ENCODE measurements at regions of chr10 and their contacts with region 1.

Region 1: DNA sequence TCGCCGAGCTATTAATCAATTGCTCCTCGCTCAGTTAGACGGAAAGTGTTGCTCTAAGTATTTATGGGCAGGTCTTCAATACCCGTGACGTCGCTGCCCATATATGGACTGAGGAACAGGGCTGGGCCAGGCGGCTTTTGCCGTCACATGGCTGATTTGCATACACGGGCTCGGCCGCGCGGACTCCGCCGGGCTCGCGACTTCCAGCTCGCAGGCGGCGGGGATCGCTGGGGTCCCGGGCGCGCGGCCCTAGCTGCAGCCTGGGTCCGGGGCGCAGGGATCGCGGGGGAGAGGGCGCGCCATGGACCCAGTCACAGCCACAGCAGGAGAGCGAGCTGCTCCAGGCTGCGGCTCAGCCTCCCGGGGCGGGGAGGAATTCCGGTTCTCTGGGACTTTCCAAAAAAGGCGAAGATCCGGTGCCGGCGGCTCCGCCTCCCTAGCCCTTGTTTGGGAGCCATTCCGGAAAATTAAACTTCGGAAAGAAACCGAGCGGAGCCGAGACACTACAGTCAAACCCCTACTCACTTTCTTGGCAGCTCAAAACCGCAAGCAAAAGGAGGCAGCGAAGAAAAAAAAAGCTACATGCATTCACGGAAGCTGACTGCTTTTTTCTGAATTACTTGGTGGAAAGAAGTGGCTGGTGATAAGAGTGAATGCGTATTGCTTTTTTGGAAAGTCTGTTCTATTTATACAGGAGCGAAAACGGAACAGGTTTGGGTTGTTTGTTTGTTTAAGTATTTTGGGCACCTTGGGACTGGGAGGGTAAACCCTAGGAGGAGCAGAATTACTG is at the start of gene EGR2:
- DNase-seq: peak; percentile 94
- H3K4me3 Mint-ChIP-seq: peak within 1 kb of the TSS; percentile 97
- H3K27ac Mint-ChIP-seq: peak within 1 kb of the TSS; percentile 100
- H3K4me1 Mint-ChIP-seq: peaks cover 45% of the 10 kb centered on the region
- H3K27me3 Mint-ChIP-seq: peaks cover 22% of the 10 kb centered on the region
- total RNA-seq, gene EGR2: 126 and 137 TPM in 2 replicates

Region 2: GRCh38 chr10:62437696-62438095 is 378.8 kb before region 1 on chr10:
- intact Hi-C with region 1: loop called (anchors 10 kb)
- DNase-seq: no peak
- H3K4me3 Mint-ChIP-seq: no peak overlapping the region
- H3K27ac Mint-ChIP-seq: no peak overlapping the region
- H3K4me1 Mint-ChIP-seq: peaks cover 12% of the 10 kb centered on the region
- H3K27me3 Mint-ChIP-seq: peaks cover 50% of the 10 kb centered on the region

Region 3: GRCh38 chr10:62610649-62611229 is 205.8 kb before region 1 on chr10:
- intact Hi-C with region 1: loop called (anchors 1 kb)
- DNase-seq: peak; percentile 58
- H3K4me3 Mint-ChIP-seq: no peak overlapping the region
- H3K27ac Mint-ChIP-seq: no peak overlapping the region
- H3K4me1 Mint-ChIP-seq: peaks cover 52% of the 10 kb centered on the region
- H3K27me3 Mint-ChIP-seq: peaks cover 5% of the 10 kb centered on the region

Region 4: DNA sequence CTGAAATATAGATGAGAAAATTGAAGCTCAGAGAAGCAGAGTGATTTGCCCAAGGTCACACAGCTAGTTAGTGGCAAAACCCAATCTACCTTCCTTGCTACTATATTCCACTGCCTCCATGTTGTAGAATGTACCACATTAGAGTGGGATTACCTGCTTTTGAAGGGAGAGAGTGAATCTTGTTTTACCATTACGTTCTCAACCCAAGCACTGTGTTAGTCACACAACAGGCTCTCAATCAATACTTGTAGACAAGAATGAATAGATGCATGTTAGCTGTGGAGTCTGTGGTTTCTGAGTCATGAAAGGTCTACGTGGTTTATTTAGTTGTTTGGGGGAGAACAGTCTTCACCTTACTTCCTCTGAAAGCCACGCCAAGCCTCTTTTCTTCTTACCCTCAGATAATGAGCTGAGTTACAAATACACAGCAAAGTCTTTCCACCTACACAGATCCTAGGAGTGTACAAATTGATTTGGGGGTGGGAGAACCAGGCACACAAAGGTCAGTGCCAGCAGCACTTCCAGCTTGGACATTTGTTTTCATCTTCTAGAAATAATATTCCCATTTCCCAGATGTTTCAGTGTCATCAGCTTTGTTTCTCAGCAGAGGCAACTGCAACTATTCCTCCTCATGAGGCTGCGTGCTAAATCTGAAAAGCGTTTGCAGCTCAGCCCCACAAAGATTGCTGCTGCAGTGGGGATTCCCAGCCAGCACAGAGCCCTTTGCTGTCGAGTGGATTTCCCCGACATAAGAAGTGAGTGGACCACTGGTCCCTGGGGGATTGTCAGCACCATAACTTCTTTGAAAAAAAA is 83.5 kb before region 1 on chr10:
- intact Hi-C with region 1: loop called (anchors 1 kb)
- DNase-seq: peak; percentile 51
- H3K4me3 Mint-ChIP-seq: peak overlapping the region; percentile 56
- H3K27ac Mint-ChIP-seq: no peak overlapping the region
- H3K4me1 Mint-ChIP-seq: peaks cover 23% of the 10 kb centered on the region
- H3K27me3 Mint-ChIP-seq: no peaks in the 10 kb centered on the region

Region 5: GRCh38 chr10:62907470-62908212 is 91.1 kb after region 1 on chr10:
- intact Hi-C with region 1: no loop called
- DNase-seq: no peak
- H3K4me3 Mint-ChIP-seq: no peak overlapping the region
- H3K27ac Mint-ChIP-seq: no peak overlapping the region
- H3K4me1 Mint-ChIP-seq: peaks cover 21% of the 10 kb centered on the region
- H3K27me3 Mint-ChIP-seq: peaks cover 4% of the 10 kb centered on the region

Region 6: DNA sequence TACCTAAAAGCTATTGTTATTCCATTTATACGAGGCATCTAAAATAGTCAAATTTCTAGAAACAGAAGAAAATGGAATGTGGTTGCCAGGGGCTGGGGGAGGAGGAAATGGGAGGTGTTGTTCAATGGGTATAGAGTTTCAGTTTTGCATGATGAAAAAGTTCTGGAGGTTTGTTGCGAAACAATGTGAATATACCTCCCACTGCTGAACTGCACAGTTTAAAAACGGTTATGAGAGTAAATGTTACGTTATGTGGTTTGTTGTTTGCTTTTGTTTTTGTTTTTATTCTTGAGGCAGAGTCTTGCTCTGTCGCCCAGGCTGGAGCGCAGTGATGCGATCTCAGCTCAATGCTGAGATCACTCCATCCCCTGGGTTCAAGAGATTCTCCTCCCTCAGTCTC is 251.7 kb after region 1 on chr10:
- intact Hi-C with region 1: loop called (anchors 2 kb)
- DNase-seq: no peak
- H3K4me3 Mint-ChIP-seq: no peak overlapping the region
- H3K27ac Mint-ChIP-seq: peak overlapping the region; percentile 75
- H3K4me1 Mint-ChIP-seq: peaks cover 51% of the 10 kb centered on the region
- H3K27me3 Mint-ChIP-seq: peaks cover 3% of the 10 kb centered on the region

Region 7: GRCh38 chr10:63157845-63158624 is 341.5 kb after region 1 on chr10:
- intact Hi-C with region 1: loop called (anchors 2 kb)
- DNase-seq: peak; percentile 25
- H3K4me3 Mint-ChIP-seq: no peak overlapping the region
- H3K27ac Mint-ChIP-seq: no peak overlapping the region
- H3K4me1 Mint-ChIP-seq: peaks cover 27% of the 10 kb centered on the region
- H3K27me3 Mint-ChIP-seq: no peaks in the 10 kb centered on the region